Body of pancreas (tissue), 4 donors: ENCODE measurements at regions of chr3 and their contacts with region 1.

Region 1: GRCh38 chr3:177197041-177197727 is at the start of gene TBL1XR1:
- DNase-seq: peak; percentile 92 to 96 (median 95)
- ATAC-seq: peak; percentile 90
- H3K4me3 ChIP-seq: peak within 1 kb of the TSS; percentile 58 to 64
- H3K27ac ChIP-seq: peak within 1 kb of the TSS; percentile 92 to 100 (median 100)
- H3K4me1 ChIP-seq: peaks cover 31% of the 10 kb centered on the region
- H3K27me3 ChIP-seq: no peaks in the 10 kb centered on the region
- CTCF ChIP-seq: no peak
- POLR2A ChIP-seq: peak in 2 of 3 donors; percentile 67
- total RNA-seq, gene TBL1XR1: 34.3 to 57.9 TPM

Region 2: DNA sequence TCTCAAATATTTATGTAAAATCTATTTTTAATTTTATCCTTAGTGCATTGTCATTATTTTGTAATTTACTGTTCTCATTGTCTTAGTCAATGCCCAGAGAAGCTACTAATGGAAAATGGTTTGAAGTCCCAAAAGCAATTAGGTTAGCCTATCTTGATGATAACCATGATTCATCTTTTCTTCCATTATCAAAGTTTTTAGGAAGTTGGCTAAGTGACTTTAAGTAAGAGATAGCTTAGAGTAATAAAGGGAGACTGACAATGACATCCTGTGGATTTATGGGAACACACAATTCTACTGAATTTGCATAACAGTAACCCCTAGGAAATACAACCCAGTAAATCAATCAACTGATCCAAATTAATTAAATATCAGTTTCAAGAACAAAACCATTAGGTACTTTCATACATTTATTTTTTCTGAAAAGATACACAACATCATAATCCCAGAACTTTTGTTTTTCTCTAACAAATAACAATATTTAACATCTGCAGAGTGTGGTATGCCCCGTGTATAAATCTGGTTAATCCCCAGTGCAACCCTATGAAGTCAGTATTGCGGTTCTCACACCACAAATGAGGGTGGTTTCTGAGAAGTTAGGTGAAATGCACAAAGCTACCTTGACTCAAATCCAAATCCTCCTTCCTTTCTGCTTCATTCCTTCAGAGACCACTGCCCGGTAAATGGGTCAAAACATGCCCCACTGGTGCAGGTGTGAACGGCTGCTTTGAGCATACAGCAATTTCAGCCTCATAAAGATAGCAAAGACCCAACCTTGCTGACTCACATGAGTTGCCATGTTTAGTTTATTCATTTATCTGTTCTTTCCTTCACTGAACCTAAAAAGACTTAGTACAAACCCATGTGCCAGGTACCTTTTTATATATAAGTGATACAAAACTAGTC is 202.1 kb before region 1 on chr3:
- intact Hi-C with region 1: no loop called
- DNase-seq: no peak
- ATAC-seq: no peak
- H3K4me3 ChIP-seq: no peak overlapping the region
- H3K27ac ChIP-seq: no peak overlapping the region
- H3K4me1 ChIP-seq: no peaks in the 10 kb centered on the region
- H3K27me3 ChIP-seq: no peaks in the 10 kb centered on the region
- CTCF ChIP-seq: no peak
- POLR2A ChIP-seq: no peak

Region 3: DNA sequence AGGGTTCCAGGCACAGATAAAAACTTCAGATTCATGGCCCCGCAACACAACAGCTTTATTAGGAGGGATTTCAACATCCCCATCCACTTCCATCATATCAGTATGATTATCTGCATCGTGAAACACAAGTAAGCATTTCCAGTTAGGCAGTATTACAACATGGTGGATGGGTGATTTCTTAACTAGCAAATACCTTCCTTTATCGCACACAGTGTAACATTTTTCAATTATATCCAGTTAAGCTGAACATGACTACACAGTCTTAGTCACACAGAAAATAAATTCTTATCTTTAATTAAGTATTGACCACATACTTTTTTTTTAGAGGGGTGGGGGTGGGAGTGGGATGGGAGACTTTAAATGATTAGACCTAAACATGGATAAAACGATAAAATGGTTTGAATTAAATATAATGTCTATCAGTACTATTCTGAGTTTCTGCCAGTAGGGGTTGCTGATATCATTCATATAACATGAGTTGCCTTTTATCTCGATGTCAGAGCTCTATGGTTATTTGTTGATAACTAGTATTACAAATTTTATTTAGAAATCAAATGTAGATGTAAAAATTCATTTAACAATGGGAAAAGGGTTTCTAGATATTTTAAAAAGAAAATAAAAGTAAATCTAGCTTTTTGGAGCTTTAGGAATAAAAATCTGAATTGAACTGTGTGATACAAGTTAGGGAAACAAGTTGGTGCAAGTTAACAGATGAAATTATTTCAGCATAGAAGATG is 146.5 kb before region 1 on chr3:
- intact Hi-C with region 1: loop called (anchors 10 kb)
- DNase-seq: no peak
- ATAC-seq: peak; percentile 69
- H3K4me3 ChIP-seq: no peak overlapping the region
- H3K27ac ChIP-seq: no peak overlapping the region
- H3K4me1 ChIP-seq: no peaks in the 10 kb centered on the region
- H3K27me3 ChIP-seq: no peaks in the 10 kb centered on the region
- CTCF ChIP-seq: peak; percentile 13 to 81 (median 69)
- POLR2A ChIP-seq: no peak

Region 4: DNA sequence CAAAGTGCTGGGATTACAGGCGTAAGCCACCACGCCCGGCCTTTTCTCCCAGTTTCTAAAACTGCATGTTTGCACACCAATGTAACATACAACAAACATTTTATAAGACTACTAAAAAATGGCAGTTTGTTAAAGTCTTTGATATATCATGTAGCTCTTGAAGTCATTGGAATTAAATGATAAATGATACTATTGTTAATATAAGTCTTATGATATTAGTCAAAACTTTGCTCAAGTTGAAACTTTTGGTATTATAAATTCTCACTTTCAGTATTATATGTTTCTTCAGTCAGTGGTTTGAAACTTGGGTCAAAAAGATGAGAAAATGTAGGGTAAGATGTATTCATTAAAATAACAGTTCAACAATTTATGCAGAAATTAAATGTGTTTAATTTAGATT is 117.7 kb after region 1 on chr3:
- intact Hi-C with region 1: no loop called
- DNase-seq: no peak
- ATAC-seq: no peak
- H3K4me3 ChIP-seq: no peak overlapping the region
- H3K27ac ChIP-seq: no peak overlapping the region
- H3K4me1 ChIP-seq: no peaks in the 10 kb centered on the region
- H3K27me3 ChIP-seq: no peaks in the 10 kb centered on the region
- CTCF ChIP-seq: no peak
- POLR2A ChIP-seq: no peak